CD4-positive, alpha-beta T cell (primary cell): ENCODE measurements at regions of chr10 and their contacts with region 1.

Region 1: GRCh38 chr10:28241741-28242399 is 61.0 kb downstream of the MPP7 start:
- DNase-seq: peak in 8 of 14 experiments; percentile 7 to 74 (median 36)
- ATAC-seq: peak; percentile 78
- H3K4me3 ChIP-seq: no peak overlapping the region
- H3K4me3 Mint-ChIP-seq: no peak overlapping the region
- H3K27ac ChIP-seq: no peak overlapping the region
- H3K27ac Mint-ChIP-seq: no peak overlapping the region
- H3K4me1 ChIP-seq: peaks cover 3% of the 10 kb centered on the region
- H3K4me1 Mint-ChIP-seq: peaks cover 45% of the 10 kb centered on the region
- H3K27me3 ChIP-seq: no peaks in the 10 kb centered on the region
- H3K27me3 Mint-ChIP-seq: no peaks in the 10 kb centered on the region
- CTCF ChIP-seq: peak; percentile 98

Region 2: GRCh38 chr10:27742195-27743011 is 499.5 kb before region 1 on chr10:
- CTCF ChIA-PET with region 1: no interaction called
- POLR2A ChIA-PET with region 1: no interaction called
- intact Hi-C with region 1: loop called (anchors 1 to 5 kb)
- DNase-seq: peak; percentile 58 to 90 (median 70)
- ATAC-seq: peak; percentile 89
- H3K4me3 ChIP-seq: peak overlapping the region; percentile 54
- H3K4me3 Mint-ChIP-seq: peak overlapping the region; percentile 91
- H3K27ac ChIP-seq: no peak overlapping the region
- H3K27ac Mint-ChIP-seq: no peak overlapping the region
- H3K4me1 ChIP-seq: peaks cover 59% of the 10 kb centered on the region
- H3K4me1 Mint-ChIP-seq: peaks cover 47% of the 10 kb centered on the region
- H3K27me3 ChIP-seq: peaks cover 55 to 72% of the 10 kb centered on the region in 2 experiments
- H3K27me3 Mint-ChIP-seq: peaks cover 81% of the 10 kb centered on the region
- CTCF ChIP-seq: peak; percentile 74

Region 3: DNA sequence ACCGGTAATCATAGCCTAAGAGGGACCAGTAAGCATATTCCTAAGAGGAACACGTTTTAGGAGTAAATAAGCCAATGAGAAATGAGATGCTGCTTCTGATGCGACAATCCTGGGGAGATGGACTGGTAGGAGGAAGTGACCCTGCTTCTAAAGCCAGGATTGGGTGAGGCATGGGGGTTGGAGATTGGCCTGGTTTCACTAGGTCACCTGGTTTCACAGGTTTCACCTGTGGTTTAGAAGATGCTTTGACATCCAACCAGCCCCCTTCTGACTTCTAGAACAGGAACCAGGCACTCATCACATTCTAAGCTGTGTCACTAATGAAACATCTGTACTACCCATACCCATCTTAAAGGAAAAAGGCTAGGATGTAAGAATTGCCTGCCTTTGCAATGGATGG is 382.5 kb after region 1 on chr10:
- CTCF ChIA-PET with region 1: no interaction called
- POLR2A ChIA-PET with region 1: no interaction called
- intact Hi-C with region 1: no loop called
- DNase-seq: peak in 1 of 14 experiments; percentile 16
- ATAC-seq: no peak
- H3K4me3 ChIP-seq: no peak overlapping the region
- H3K4me3 Mint-ChIP-seq: no peak overlapping the region
- H3K27ac ChIP-seq: no peak overlapping the region
- H3K27ac Mint-ChIP-seq: no peak overlapping the region
- H3K4me1 ChIP-seq: peaks cover 4% of the 10 kb centered on the region
- H3K4me1 Mint-ChIP-seq: peaks cover 12% of the 10 kb centered on the region
- H3K27me3 ChIP-seq: no peaks in the 10 kb centered on the region
- H3K27me3 Mint-ChIP-seq: peaks cover 14% of the 10 kb centered on the region
- CTCF ChIP-seq: no peak